Gastrocnemius medialis (tissue), 4 donors: ENCODE measurements at regions of chr14 and their contacts with region 1.

Region 1: DNA sequence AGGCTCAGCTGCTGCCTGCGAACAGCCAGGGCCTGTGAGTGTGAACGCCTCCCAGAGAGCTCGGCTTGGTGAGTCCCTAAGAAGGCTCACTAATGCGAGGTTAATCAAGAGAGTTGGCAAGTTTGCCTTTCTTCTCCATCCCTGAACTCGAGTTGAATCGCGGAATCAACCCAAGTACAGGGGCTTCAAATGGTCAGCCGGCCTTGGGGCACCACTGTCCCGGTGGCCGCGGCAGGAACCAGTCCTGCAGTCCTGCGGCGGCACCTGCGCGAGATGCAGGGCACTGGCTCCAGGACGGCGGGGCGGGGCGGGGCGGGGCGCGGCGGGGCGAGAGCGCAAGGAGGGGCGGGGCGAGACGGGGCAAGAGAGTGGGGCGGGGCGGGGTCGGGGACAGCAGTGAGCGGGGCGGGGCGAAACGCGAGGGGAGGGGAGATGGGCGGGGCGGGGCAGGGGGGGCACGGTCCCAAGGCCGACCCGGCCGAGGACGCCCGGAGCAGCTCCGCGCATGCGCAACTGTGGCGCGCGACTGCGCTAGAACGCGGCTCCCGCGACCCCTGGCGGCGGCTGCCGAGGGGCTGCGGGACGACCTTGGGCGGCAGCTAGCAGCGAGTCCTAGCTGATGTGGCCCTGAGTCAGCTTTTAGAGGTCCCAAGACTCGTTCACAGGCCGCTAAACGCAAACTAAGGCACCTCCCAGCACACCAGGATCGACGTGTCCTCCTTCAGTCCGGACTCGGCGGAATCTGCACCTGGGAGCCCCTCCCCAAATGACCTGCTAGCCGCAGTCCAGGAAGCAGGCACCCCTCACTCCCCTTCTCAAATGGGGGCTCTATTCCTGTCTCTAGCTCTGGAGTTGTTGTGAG is 58.0 kb downstream of the TTC7B start:
- DNase-seq: peak; percentile 87 to 90
- ATAC-seq: peak; percentile 57 to 61
- H3K4me3 ChIP-seq: peak overlapping the region; percentile 54 to 66 (median 58)
- H3K27ac ChIP-seq: peak overlapping the region; percentile 91 to 97 (median 95)
- H3K4me1 ChIP-seq: peaks cover 15 to 29% of the 10 kb centered on the region in 2 donors
- H3K27me3 ChIP-seq: no peaks in the 10 kb centered on the region
- CTCF ChIP-seq: peak; percentile 86 to 96 (median 94)
- POLR2A ChIP-seq: peak; percentile 78 to 80

Region 2: GRCh38 chr14:90256354-90257131 is 501.7 kb before region 1 on chr14 and contains the start of gene PSMC1:
- in situ Hi-C with region 1: no loop called
- intact Hi-C with region 1: loop called (anchors 2 kb)
- DNase-seq: peak; percentile 87 to 92
- ATAC-seq: peak; percentile 97 to 98
- H3K4me3 ChIP-seq: peak within 1 kb of the TSS; percentile 83 to 99 (median 89)
- H3K27ac ChIP-seq: peak within 1 kb of the TSS; percentile 89 to 98 (median 94)
- H3K4me1 ChIP-seq: peaks cover 20% of the 10 kb centered on the region in 2 donors
- H3K27me3 ChIP-seq: no peaks in the 10 kb centered on the region
- CTCF ChIP-seq: no peak
- POLR2A ChIP-seq: peak; percentile 58 to 80
- total RNA-seq, gene PSMC1: 374 to 642 (median 528) TPM

Region 3: DNA sequence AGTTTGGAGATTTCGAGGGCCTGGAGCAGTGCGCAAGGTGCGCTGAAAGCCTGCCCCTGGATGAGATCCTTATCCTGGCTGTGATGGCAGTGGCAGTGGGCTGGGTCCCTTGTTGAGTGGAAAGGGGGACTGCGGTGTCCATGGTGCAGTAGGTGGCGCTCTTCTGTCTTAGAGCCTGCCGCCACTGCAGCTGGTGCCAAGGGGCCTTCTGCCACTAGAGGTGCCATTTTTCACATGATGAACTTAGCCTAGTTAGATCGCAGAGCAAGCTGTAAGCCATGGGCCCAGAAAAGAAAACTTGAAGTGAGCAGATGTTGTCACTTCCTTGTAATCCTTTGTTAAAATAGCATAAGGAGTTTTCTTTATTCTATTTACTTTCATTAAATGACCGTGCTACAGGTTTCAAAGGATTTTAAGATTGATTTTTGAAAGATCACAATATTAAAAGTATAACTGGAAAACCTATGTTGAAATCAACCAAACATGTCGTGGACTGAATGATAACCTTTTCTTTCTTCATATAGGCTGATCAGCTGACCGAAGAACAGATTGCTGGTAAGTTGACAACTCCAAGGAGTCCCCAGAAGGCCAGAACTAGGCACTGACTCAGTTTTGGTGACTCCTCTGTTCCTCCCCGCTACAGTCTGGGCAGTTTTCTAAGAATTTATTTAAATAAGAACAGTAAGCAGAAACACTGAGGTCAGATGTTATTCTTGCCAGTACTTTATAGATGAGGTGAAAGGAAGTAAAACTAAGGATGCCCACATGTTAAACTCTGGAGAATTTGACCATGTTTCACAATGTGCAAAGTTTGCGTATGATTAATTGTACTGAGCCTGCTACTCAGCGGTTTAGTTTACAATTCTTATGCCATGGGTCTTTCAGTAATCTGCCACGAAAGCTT is 358.5 kb before region 1 on chr14:
- in situ Hi-C with region 1: loop called in 2 of 4 experiments (anchors 10 kb)
- intact Hi-C with region 1: loop called (anchors 1 kb)
- DNase-seq: peak; percentile 92 to 96
- ATAC-seq: peak; percentile 80 to 81
- H3K4me3 ChIP-seq: peak overlapping the region; percentile 82 to 100 (median 98)
- H3K27ac ChIP-seq: peak overlapping the region; percentile 91 to 94 (median 94)
- H3K4me1 ChIP-seq: peaks cover 49 to 64% of the 10 kb centered on the region in 2 donors
- H3K27me3 ChIP-seq: no peaks in the 10 kb centered on the region
- CTCF ChIP-seq: peak; percentile 95 to 100 (median 97)
- POLR2A ChIP-seq: peak in 1 of 2 donors; percentile 14

Region 4: GRCh38 chr14:90658541-90658967 is 99.7 kb before region 1 on chr14:
- in situ Hi-C with region 1: no loop called
- intact Hi-C with region 1: no loop called
- DNase-seq: no peak
- ATAC-seq: no peak
- H3K4me3 ChIP-seq: no peak overlapping the region
- H3K27ac ChIP-seq: no peak overlapping the region
- H3K4me1 ChIP-seq: peaks cover 18 to 30% of the 10 kb centered on the region in 2 donors
- H3K27me3 ChIP-seq: no peaks in the 10 kb centered on the region
- CTCF ChIP-seq: no peak
- POLR2A ChIP-seq: no peak

Region 5: DNA sequence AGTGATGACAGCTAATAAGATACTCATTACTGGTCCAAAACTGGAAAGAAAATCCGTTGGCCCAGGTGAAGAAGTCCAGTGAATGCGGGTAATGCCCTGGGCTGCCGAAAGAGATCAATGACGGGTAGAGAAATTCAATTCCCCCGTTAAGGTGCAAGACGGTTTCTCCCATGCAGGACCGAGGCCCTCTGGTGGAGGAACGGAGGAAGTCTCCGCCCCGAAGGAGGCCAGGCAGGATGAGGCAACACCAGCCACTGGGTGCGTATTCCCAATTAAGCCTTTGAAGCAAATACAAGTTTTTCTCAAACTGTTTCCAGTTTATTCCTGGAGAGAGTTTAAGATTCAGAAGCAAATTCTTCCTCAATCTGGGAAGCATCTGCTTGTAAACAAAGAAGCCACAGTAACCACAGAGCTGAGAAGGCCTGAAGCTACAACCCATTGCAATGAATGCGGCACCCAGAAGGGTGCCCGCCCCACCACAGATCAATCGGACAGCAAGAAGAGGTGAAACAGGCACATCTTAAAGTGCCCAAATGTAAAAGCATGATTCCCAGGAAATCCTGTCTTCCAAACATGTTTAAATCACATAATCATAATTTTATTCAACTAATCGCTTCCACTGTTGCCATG is 60.6 kb before region 1 on chr14:
- in situ Hi-C with region 1: loop called in 1 of 4 experiments (anchors 10 kb)
- intact Hi-C with region 1: loop called (anchors 2 kb)
- DNase-seq: peak; percentile 84 to 88
- ATAC-seq: peak; percentile 56 to 61
- H3K4me3 ChIP-seq: peak overlapping the region in 1 of 4 donors; percentile 0
- H3K27ac ChIP-seq: peak overlapping the region; percentile 87 to 93 (median 88)
- H3K4me1 ChIP-seq: peaks cover 69 to 71% of the 10 kb centered on the region in 2 donors
- H3K27me3 ChIP-seq: no peaks in the 10 kb centered on the region
- CTCF ChIP-seq: peak; percentile 96 to 98 (median 96)
- POLR2A ChIP-seq: no peak

Region 6: DNA sequence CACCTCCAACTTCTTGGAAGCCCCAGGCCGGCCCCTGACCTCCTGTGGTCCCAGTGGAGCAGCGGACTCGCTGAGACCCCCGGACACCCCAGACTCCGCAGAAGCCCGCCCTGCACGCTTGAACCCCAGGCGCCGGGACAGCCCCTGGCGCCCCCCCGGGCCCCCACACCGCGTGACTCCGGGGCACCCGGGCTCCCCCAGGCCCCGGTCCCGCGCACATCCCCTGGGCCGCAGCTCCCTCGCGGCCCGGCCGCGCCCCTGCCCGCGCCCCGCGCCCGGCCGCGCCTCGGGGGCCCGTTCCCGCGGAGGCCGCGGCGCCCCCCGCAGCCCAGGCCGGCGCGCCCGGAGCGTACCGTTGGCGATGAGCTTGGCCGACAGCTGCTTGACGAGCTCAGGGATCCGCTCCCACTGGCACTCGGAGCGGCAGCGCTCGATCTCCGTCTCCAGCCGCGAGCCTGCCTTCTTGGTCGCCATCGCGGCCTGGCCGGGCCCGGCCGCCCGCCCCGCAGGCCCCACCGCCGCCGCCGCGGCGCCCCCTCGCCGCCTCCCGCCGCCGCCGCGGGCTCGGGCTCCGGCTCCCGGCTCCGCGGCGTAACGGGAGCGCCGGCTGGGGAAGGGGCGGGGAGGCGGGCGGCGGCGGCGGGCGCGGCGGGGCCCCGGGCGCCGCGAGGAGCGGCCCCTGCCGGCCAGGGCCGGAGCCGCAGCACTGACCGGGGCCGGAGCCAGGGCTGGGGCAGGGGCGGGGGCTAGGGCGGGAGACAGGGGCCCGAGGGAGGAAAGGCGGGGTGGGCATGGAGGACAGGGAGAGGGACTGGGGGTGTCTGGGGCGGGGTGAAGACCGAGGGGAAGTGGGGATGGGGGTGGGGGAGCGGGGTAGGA is 57.8 kb after region 1 on chr14 and contains the start of gene TTC7B:
- in situ Hi-C with region 1: no loop called
- intact Hi-C with region 1: loop called (anchors 5 kb)
- DNase-seq: peak in 1 of 2 donors; percentile 28
- ATAC-seq: peak; percentile 87 to 91
- H3K4me3 ChIP-seq: peak within 1 kb of the TSS; percentile 73 to 81 (median 76)
- H3K27ac ChIP-seq: peak within 1 kb of the TSS; percentile 52 to 70 (median 65)
- H3K4me1 ChIP-seq: peaks cover 25 to 35% of the 10 kb centered on the region in 2 donors
- H3K27me3 ChIP-seq: no peaks in the 10 kb centered on the region
- CTCF ChIP-seq: peak in 2 of 5 experiments; percentile 40 to 49
- POLR2A ChIP-seq: no peak
- total RNA-seq, gene TTC7B: 35.0 to 78.7 (median 36.8) TPM

Region 7: DNA sequence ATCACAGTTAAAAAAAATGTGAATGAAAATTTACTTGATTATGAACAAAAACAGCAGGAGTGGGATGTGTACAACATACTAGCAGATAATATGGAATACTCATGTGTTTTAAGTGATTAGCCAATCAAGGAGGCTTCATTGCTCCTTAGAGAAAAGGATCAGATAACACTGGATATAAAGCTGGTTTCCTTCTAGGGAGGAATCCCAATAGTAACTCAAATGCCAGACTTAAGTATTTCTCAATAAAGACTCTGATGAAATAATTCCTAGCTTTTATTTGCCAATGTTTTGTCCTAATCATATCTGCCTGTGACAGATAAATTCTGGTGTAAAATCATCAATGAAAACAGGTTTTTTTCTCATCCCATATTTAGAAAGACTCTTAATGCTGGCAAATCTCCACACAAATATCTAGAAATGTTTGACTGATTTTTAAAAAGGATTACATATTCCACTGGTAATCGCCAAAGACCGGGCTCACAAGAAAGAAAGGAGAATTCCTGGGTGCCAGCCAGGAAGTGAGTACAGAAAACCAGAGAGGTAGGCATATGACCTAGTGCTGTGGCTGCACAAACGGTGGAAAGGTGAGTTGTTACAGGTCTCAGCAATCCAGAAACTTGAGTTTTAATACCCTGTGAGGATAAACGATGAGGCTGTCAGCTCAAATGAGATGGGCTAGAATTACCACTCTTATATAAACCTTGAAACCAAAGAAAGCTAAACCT is 166.5 kb after region 1 on chr14:
- in situ Hi-C with region 1: no loop called
- intact Hi-C with region 1: no loop called
- DNase-seq: no peak
- ATAC-seq: peak in 1 of 2 donors; percentile 24
- H3K4me3 ChIP-seq: no peak overlapping the region
- H3K27ac ChIP-seq: no peak overlapping the region
- H3K4me1 ChIP-seq: no peaks in the 10 kb centered on the region
- H3K27me3 ChIP-seq: no peaks in the 10 kb centered on the region
- CTCF ChIP-seq: no peak
- POLR2A ChIP-seq: no peak

Region 8: GRCh38 chr14:91009501-91010152 is 251.4 kb after region 1 on chr14:
- in situ Hi-C with region 1: no loop called
- intact Hi-C with region 1: no loop called
- DNase-seq: no peak
- ATAC-seq: peak in 1 of 2 donors; percentile 41
- H3K4me3 ChIP-seq: no peak overlapping the region
- H3K27ac ChIP-seq: no peak overlapping the region
- H3K4me1 ChIP-seq: peaks cover 3 to 15% of the 10 kb centered on the region in 2 donors
- H3K27me3 ChIP-seq: no peaks in the 10 kb centered on the region
- CTCF ChIP-seq: no peak
- POLR2A ChIP-seq: no peak